ENCODE measurements at regions of chr11 and their contacts with region 1.

Region 1: DNA sequence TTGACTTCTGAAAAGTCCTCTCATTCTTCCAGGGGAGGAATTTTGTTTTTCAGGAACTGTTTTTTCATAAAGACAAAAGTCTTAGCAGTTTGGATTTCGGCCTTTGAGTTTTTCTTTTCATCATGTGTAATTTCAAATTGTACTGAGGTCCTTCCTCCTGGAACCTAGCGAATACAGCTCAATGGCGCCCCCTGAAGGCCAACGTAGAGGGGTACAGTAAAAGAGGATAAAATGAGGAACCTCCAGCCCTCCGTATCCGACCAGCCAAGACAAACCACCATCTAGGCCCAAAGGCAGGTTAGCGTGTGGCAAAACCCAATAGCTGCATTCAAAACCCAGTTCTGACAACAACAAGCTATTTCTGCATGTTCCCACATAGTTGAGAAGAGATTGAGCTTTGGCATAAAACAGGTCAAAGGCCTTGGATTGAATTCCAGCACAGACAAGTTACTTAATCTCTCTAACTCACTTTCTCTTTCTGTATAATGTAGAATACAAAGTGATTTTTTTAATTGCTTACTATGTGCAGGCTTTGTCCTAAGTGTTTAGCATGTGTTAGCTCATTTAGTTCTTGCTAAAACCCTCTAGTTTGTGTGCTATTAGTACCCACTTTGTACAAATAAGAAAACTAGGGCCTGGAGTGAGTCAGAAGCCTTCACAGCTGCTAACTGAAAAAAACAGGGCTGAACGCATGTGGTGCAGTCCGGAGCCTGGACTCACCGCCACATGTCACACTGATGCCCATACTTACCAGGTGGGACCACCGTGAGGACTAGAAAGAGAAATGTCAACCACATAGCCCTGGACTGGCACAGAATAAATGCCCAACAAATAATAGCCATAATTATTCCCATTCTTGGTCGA is 43.2 kb upstream of the ETS1 start:
- DNase-seq: peak; percentile 96
- ATAC-seq: peak; percentile 87
- H3K4me3 ChIP-seq: peak overlapping the region in 2 of 5 experiments; percentile 3 to 11
- H3K4me3 Mint-ChIP-seq: peak overlapping the region; percentile 65
- H3K27ac ChIP-seq: peak overlapping the region; percentile 43 to 90
- H3K27ac Mint-ChIP-seq: peak overlapping the region; percentile 93
- H3K4me1 ChIP-seq: peaks cover 66 to 68% of the 10 kb centered on the region in 2 donors
- H3K4me1 Mint-ChIP-seq: peaks cover 66% of the 10 kb centered on the region
- H3K27me3 ChIP-seq: no peaks in the 10 kb centered on the region
- H3K27me3 Mint-ChIP-seq: no peaks in the 10 kb centered on the region
- CTCF ChIP-seq: peak; percentile 86

Region 2: GRCh38 chr11:128172046-128172878 is 458.3 kb before region 1 on chr11:
- CTCF ChIA-PET with region 1: interaction called, 215 read pairs
- POLR2A ChIA-PET with region 1: interaction called, 3 read pairs
- intact Hi-C with region 1: loop called (anchors 1 kb)
- DNase-seq: peak; percentile 86
- ATAC-seq: peak; percentile 70
- H3K4me3 ChIP-seq: no peak overlapping the region
- H3K4me3 Mint-ChIP-seq: no peak overlapping the region
- H3K27ac ChIP-seq: no peak overlapping the region
- H3K27ac Mint-ChIP-seq: no peak overlapping the region
- H3K4me1 ChIP-seq: peaks cover 3 to 4% of the 10 kb centered on the region in 2 donors
- H3K4me1 Mint-ChIP-seq: peaks cover 3% of the 10 kb centered on the region
- H3K27me3 ChIP-seq: peaks cover 0 to 4% (median 0%) of the 10 kb centered on the region in 4 experiments
- H3K27me3 Mint-ChIP-seq: peaks cover 10% of the 10 kb centered on the region
- CTCF ChIP-seq: peak; percentile 89

Region 3: GRCh38 chr11:128323381-128323780 is 307.2 kb before region 1 on chr11:
- CTCF ChIA-PET with region 1: interaction called, 55 read pairs
- POLR2A ChIA-PET with region 1: no interaction called
- intact Hi-C with region 1: loop called (anchors 1 kb)
- DNase-seq: peak; percentile 52
- ATAC-seq: no peak
- H3K4me3 ChIP-seq: no peak overlapping the region
- H3K4me3 Mint-ChIP-seq: no peak overlapping the region
- H3K27ac ChIP-seq: no peak overlapping the region
- H3K27ac Mint-ChIP-seq: peak overlapping the region; percentile 66
- H3K4me1 ChIP-seq: peaks cover 32% of the 10 kb centered on the region in 2 donors
- H3K4me1 Mint-ChIP-seq: peaks cover 43% of the 10 kb centered on the region
- H3K27me3 ChIP-seq: no peaks in the 10 kb centered on the region
- H3K27me3 Mint-ChIP-seq: no peaks in the 10 kb centered on the region
- CTCF ChIP-seq: peak; percentile 34

Region 4: GRCh38 chr11:128506999-128507611 is 123.5 kb before region 1 on chr11:
- CTCF ChIA-PET with region 1: interaction called, 24 read pairs
- POLR2A ChIA-PET with region 1: interaction called, 3 read pairs
- intact Hi-C with region 1: no loop called
- DNase-seq: peak; percentile 39
- ATAC-seq: peak; percentile 54
- H3K4me3 ChIP-seq: peak overlapping the region in 4 of 5 experiments; percentile 8 to 41 (median 30)
- H3K4me3 Mint-ChIP-seq: peak overlapping the region; percentile 82
- H3K27ac ChIP-seq: peak overlapping the region; percentile 25 to 82
- H3K27ac Mint-ChIP-seq: peak overlapping the region; percentile 86
- H3K4me1 ChIP-seq: peaks cover 100% of the 10 kb centered on the region in 2 donors
- H3K4me1 Mint-ChIP-seq: peaks cover 98% of the 10 kb centered on the region
- H3K27me3 ChIP-seq: no peaks in the 10 kb centered on the region
- H3K27me3 Mint-ChIP-seq: no peaks in the 10 kb centered on the region
- CTCF ChIP-seq: no peak

Region 5: DNA sequence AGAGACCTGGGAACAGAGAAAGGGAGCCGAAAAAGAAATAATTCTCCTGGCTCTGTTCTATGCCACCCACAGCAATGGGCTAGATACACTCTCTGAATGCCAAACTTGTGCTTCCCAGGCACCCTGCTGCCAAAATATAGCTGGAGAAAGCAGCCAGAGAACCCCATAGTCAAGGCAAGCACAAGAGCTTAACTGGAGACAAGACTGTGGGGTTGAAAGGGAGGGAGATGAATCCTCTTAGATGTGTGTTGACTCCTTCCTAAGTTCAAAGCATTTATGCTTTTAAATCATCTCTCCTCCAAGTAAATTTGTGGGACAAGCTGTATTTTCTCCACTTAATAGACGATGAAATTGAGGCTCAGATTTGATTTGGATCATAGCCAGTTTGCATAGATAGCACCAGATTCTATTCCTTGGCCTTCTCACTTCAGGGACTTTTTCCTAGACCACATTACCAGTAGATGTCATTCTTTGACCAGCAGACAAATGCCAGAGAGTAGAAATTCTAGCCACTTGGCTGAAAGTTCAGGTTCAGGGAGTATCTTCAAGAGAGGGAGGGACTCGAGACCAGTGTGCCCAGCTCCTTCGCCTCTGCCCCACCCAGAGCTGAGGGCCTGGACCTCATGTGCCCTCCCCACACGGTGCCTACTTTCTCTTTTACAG is 26.7 kb before region 1 on chr11:
- CTCF ChIA-PET with region 1: interaction called, 625 read pairs
- POLR2A ChIA-PET with region 1: interaction called, 305 read pairs
- intact Hi-C with region 1: loop called (anchors 1 kb)
- DNase-seq: peak; percentile 63
- ATAC-seq: peak; percentile 69
- H3K4me3 ChIP-seq: no peak overlapping the region
- H3K4me3 Mint-ChIP-seq: peak overlapping the region; percentile 35
- H3K27ac ChIP-seq: peak overlapping the region in 1 of 2 donors; percentile 10
- H3K27ac Mint-ChIP-seq: peak overlapping the region; percentile 72
- H3K4me1 ChIP-seq: peaks cover 55 to 59% of the 10 kb centered on the region in 2 donors
- H3K4me1 Mint-ChIP-seq: peaks cover 72% of the 10 kb centered on the region
- H3K27me3 ChIP-seq: no peaks in the 10 kb centered on the region
- H3K27me3 Mint-ChIP-seq: no peaks in the 10 kb centered on the region
- CTCF ChIP-seq: no peak

Region 6: DNA sequence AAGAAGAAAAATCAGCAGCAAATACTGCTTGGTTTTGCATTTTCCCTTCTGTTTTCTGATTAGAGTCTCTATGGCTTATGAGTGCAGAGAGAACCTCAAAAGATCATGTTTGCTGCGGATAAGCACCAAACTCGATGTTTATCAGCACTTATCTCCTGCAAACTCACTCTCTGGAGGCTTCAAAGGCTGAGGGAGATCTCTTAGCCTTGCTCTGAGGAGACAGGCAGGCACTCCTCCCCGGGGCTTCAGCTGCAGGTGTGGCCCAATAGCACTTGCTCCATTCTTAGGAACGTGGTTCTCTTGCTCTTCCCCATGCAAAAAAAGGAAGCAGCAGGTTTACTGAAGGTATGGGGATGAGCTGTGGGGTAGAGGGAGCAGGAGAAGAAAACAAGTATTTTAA is 108.3 kb after region 1 on chr11:
- CTCF ChIA-PET with region 1: interaction called, 13 read pairs
- POLR2A ChIA-PET with region 1: no interaction called
- intact Hi-C with region 1: no loop called
- DNase-seq: peak; percentile 26
- ATAC-seq: no peak
- H3K4me3 ChIP-seq: no peak overlapping the region
- H3K4me3 Mint-ChIP-seq: peak overlapping the region; percentile 66
- H3K27ac ChIP-seq: peak overlapping the region; percentile 36 to 80
- H3K27ac Mint-ChIP-seq: peak overlapping the region; percentile 87
- H3K4me1 ChIP-seq: peaks cover 89 to 91% of the 10 kb centered on the region in 2 donors
- H3K4me1 Mint-ChIP-seq: peaks cover 88% of the 10 kb centered on the region
- H3K27me3 ChIP-seq: no peaks in the 10 kb centered on the region
- H3K27me3 Mint-ChIP-seq: no peaks in the 10 kb centered on the region
- CTCF ChIP-seq: no peak

Measured in B cell (primary cell).